GM12878 (cell line): ENCODE measurements at regions of chr2 and their contacts with region 1.

Region 1: GRCh38 chr2:17753803-17754663 is at the starts of genes GEN1 and SMC6:
- DNase-seq: peak; percentile 83
- ATAC-seq: peak; percentile 80
- H3K4me3 ChIP-seq: peak within 1 kb of the TSS; percentile 91
- H3K27ac ChIP-seq: peak within 1 kb of the TSS; percentile 94
- H3K4me1 ChIP-seq: peaks cover 9% of the 10 kb centered on the region
- H3K27me3 ChIP-seq: no peaks in the 10 kb centered on the region
- CTCF ChIP-seq: no peak
- EP300 ChIP-seq: no peak
- POLR2A ChIP-seq: no peak; the same call in 1 of the 2 replicates
- RAD21 ChIP-seq: no peak
- polyA plus RNA-seq, gene GEN1: 6.0 to 9.4 TPM
- polyA plus RNA-seq, gene SMC6: 12.8 to 18.9 TPM

Region 2: DNA sequence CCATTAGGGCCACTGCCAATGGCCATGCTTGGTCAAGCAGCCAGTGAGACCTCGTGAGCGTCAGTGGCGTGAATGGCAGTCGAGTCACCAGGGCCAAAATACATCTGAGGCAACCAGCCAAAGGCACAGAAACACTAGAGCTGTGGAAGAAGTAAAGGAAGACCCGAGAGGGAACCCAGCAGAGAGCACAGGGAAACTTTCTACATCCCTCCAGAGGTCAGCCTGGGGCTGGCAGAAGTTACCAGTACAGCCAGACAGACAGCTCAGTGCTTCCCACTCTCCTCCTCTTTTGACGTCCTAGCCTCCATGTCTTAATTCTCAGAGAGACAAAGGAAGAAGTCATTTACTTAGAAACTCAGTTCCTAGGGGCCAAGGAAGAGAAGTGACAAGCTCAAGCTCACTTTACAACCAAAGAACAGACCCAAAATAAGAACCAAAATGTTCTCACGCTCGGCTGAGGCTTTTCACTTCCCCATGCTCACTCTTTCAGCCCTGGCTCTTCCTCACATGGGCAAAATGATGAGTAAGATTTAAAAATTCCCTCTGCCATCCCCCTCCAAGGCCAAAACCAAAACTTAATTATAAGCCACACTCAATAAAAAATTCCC is 1097.1 kb before region 1 on chr2:
- CTCF ChIA-PET with region 1: no interaction called
- POLR2A ChIA-PET with region 1: no interaction called
- RAD21 ChIA-PET with region 1: no interaction called
- SMC1A ChIA-PET with region 1: no interaction called
- in situ Hi-C with region 1: no loop called
- intact Hi-C with region 1: loop called (anchors 10 kb)
- DNase-seq: peak; percentile 83
- ATAC-seq: peak; percentile 67
- H3K4me3 ChIP-seq: peak overlapping the region; percentile 3; the same call in 1 of the 2 replicates
- H3K27ac ChIP-seq: peak overlapping the region; percentile 68
- H3K4me1 ChIP-seq: peaks cover 48% of the 10 kb centered on the region
- H3K27me3 ChIP-seq: peaks cover 0 to 2% of the 10 kb centered on the region in 2 experiments; a peak in 2 of 4 replicates
- CTCF ChIP-seq: no peak
- EP300 ChIP-seq: peak; percentile 62 to 73; a peak in 3 of 4 replicates
- POLR2A ChIP-seq: no peak
- RAD21 ChIP-seq: no peak

Region 3: DNA sequence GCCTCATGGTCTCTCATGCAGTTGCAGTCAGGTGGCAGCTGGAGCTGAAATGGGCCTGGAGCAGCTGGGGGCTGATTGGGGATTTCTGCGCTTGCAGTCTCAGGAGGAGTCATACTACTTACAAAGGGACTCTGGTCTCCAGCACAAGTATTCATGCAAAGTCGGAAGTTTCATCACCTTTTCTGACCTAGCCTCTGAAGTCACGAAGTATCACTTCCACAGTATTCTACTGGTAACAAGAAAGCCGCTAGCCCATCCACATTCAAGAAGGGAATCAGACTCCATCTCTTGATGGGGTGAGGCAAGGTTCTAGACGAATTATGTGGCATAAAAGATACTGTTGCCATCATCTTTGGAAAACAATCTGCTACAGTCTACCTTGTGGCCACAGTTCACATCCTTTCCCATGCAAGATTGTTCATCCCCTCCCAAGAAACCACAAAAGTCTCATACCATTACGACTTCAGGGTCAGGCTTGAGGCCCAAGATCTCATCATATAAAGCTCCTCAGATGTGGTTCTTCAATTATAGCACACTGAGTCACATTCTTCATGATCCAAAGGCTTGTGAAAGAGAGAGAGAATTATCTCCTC is 95.7 kb before region 1 on chr2:
- CTCF ChIA-PET with region 1: no interaction called
- POLR2A ChIA-PET with region 1: no interaction called
- RAD21 ChIA-PET with region 1: no interaction called
- SMC1A ChIA-PET with region 1: no interaction called
- in situ Hi-C with region 1: no loop called
- intact Hi-C with region 1: no loop called
- DNase-seq: peak; percentile 64
- ATAC-seq: peak; percentile 95
- H3K4me3 ChIP-seq: no peak overlapping the region
- H3K27ac ChIP-seq: peak overlapping the region; percentile 57
- H3K4me1 ChIP-seq: peaks cover 15% of the 10 kb centered on the region
- H3K27me3 ChIP-seq: no peaks in the 10 kb centered on the region
- CTCF ChIP-seq: no peak
- EP300 ChIP-seq: peak in 1 of 2 experiments; percentile 33; a peak in 1 of 4 replicates
- POLR2A ChIP-seq: no peak
- RAD21 ChIP-seq: no peak

Region 4: DNA sequence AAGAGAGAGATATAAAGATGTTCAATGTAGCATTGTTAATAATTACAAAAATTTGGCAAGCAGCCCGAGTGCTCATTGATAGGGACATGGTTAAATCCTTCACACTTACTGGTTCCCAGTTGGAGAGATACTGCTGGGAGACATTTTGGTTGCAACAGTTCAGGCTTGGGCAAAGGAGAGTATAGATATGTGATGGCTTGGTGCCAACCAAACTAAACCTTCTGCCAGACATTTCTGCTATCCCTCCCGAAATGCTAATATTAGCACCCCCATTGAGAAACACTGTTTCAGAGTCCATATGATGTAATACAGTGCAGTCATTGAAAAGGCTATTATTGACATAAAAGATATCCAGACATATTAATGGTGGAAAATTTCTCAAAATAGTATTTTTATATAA is 11.4 kb after region 1 on chr2:
- CTCF ChIA-PET with region 1: interaction called, 12 read pairs
- POLR2A ChIA-PET with region 1: interaction called, 3 read pairs
- RAD21 ChIA-PET with region 1: interaction called, 5 read pairs
- SMC1A ChIA-PET with region 1: interaction called, 6 read pairs
- in situ Hi-C with region 1: no loop called
- intact Hi-C with region 1: no loop called
- DNase-seq: no peak
- ATAC-seq: no peak
- H3K4me3 ChIP-seq: no peak overlapping the region
- H3K27ac ChIP-seq: no peak overlapping the region
- H3K4me1 ChIP-seq: no peaks in the 10 kb centered on the region
- H3K27me3 ChIP-seq: no peaks in the 10 kb centered on the region
- CTCF ChIP-seq: no peak
- EP300 ChIP-seq: no peak
- POLR2A ChIP-seq: no peak
- RAD21 ChIP-seq: no peak

Region 5: DNA sequence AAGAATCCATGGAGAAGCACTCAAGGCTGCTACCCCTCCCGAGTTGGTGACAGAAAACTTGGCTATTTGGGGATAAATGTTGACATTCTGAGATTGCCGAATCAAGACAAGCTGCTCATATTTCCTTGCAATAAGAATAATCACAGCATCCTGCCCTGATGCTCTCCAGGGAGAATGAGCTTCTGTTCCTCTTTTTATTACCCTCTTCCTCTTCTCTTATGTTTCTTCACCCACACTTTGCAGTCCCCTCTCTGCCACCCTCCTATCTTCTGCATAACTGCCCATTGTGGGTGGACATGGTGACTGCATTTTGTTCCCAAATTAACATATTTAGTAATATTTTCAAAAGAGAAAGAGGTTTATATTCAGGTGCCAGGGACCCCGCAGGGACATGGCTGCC is 50.3 kb after region 1 on chr2:
- CTCF ChIA-PET with region 1: interaction called, 8 read pairs
- POLR2A ChIA-PET with region 1: interaction called, 13 read pairs
- RAD21 ChIA-PET with region 1: interaction called, 16 read pairs
- SMC1A ChIA-PET with region 1: interaction called, 32 read pairs
- in situ Hi-C with region 1: no loop called
- intact Hi-C with region 1: no loop called
- DNase-seq: no peak
- ATAC-seq: peak; percentile 80
- H3K4me3 ChIP-seq: peak overlapping the region; percentile 22
- H3K27ac ChIP-seq: peak overlapping the region; percentile 41
- H3K4me1 ChIP-seq: peaks cover 24% of the 10 kb centered on the region
- H3K27me3 ChIP-seq: no peaks in the 10 kb centered on the region
- CTCF ChIP-seq: no peak
- EP300 ChIP-seq: peak in 1 of 2 experiments; percentile 88; a peak in 2 of 4 replicates
- POLR2A ChIP-seq: no peak
- RAD21 ChIP-seq: no peak

Region 6: GRCh38 chr2:17821535-17822444 is 67.8 kb after region 1 on chr2:
- CTCF ChIA-PET with region 1: interaction called, 45 read pairs
- POLR2A ChIA-PET with region 1: interaction called, 16 read pairs
- RAD21 ChIA-PET with region 1: interaction called, 49 read pairs
- SMC1A ChIA-PET with region 1: interaction called, 60 read pairs
- in situ Hi-C with region 1: no loop called
- intact Hi-C with region 1: loop called (anchors 2 kb)
- DNase-seq: no peak
- ATAC-seq: peak; percentile 65
- H3K4me3 ChIP-seq: 0 out of 2 replicates have a peak overlapping the region, but pooled peaks have one; percentile 48
- H3K27ac ChIP-seq: peak overlapping the region; percentile 55
- H3K4me1 ChIP-seq: peaks cover 29% of the 10 kb centered on the region
- H3K27me3 ChIP-seq: no peaks in the 10 kb centered on the region
- CTCF ChIP-seq: no peak
- EP300 ChIP-seq: peak; percentile 37 to 40; a peak in 1 of 4 replicates
- POLR2A ChIP-seq: no peak
- RAD21 ChIP-seq: no peak; the same call in 1 of the 2 replicates